ENCODE measurements at regions of chr6 and their contacts with region 1.

Region 1: GRCh38 chr6:154156135-154156896 is 117.3 kb downstream of the OPRM1 start:
- DNase-seq: no peak
- ATAC-seq: peak; percentile 79
- H3K4me3 ChIP-seq: peak overlapping the region; percentile 35; the same call in 1 of the 2 replicates
- H3K27ac ChIP-seq: peak overlapping the region; percentile 64
- H3K4me1 ChIP-seq: peaks cover 16% of the 10 kb centered on the region
- H3K27me3 ChIP-seq: no peaks in the 10 kb centered on the region; a peak in 1 of 4 replicates
- CTCF ChIP-seq: peak; percentile 55 to 73 (median 64)
- EP300 ChIP-seq: no peak
- POLR2A ChIP-seq: no peak
- RAD21 ChIP-seq: peak; percentile 71

Region 2: DNA sequence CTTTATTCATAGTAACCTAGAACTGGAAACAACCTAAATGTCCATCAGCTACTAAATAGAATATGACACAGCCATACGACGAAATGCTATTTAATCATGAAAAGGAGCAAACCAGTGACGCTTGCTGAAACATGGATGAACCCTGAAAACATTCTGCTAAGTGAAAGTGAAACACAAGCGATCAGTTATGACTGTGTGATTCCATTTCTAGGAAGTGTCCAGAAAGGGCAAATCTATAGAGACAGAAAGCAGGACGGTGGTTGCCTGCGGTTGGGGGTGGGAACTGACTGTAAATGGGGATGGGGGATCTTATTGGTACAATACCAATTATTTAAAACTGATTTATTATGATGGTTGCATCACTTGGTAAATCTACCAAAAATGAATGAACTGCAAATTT is 73.5 kb after region 1 on chr6:
- CTCF ChIA-PET with region 1: interaction called, 11 read pairs
- POLR2A ChIA-PET with region 1: interaction called, 5 read pairs
- RAD21 ChIA-PET with region 1: interaction called, 5 read pairs
- SMC1A ChIA-PET with region 1: interaction called, 5 read pairs
- in situ Hi-C with region 1: no loop called
- intact Hi-C with region 1: loop called (anchors 5 kb)
- DNase-seq: no peak
- ATAC-seq: peak; percentile 82
- H3K4me3 ChIP-seq: 0 out of 2 replicates have a peak overlapping the region, but pooled peaks have one; percentile 4
- H3K27ac ChIP-seq: peak overlapping the region; percentile 35; the same call in 1 of the 2 replicates
- H3K4me1 ChIP-seq: peaks cover 9% of the 10 kb centered on the region
- H3K27me3 ChIP-seq: no peaks in the 10 kb centered on the region
- CTCF ChIP-seq: no peak
- EP300 ChIP-seq: peak in 1 of 2 experiments; percentile 63; a peak in 1 of 4 replicates
- POLR2A ChIP-seq: no peak
- RAD21 ChIP-seq: no peak

Region 3: GRCh38 chr6:154252678-154253077 is 96.4 kb after region 1 on chr6:
- CTCF ChIA-PET with region 1: interaction called, 11 read pairs
- POLR2A ChIA-PET with region 1: interaction called, 4 read pairs
- RAD21 ChIA-PET with region 1: interaction called, 33 read pairs
- SMC1A ChIA-PET with region 1: interaction called, 59 read pairs
- in situ Hi-C with region 1: no loop called
- intact Hi-C with region 1: loop called (anchors 2 kb)
- DNase-seq: no peak
- ATAC-seq: no peak
- H3K4me3 ChIP-seq: no peak overlapping the region
- H3K27ac ChIP-seq: no peak overlapping the region
- H3K4me1 ChIP-seq: peaks cover 36% of the 10 kb centered on the region
- H3K27me3 ChIP-seq: no peaks in the 10 kb centered on the region
- CTCF ChIP-seq: no peak
- EP300 ChIP-seq: no peak
- POLR2A ChIP-seq: no peak
- RAD21 ChIP-seq: no peak

Region 4: GRCh38 chr6:154359161-154359574 is 202.9 kb after region 1 on chr6:
- CTCF ChIA-PET with region 1: no interaction called
- POLR2A ChIA-PET with region 1: no interaction called
- RAD21 ChIA-PET with region 1: interaction called, 3 read pairs
- SMC1A ChIA-PET with region 1: interaction called, 3 read pairs
- in situ Hi-C with region 1: loop called (anchors 5 kb)
- intact Hi-C with region 1: loop called (anchors 5 kb)
- DNase-seq: no peak
- ATAC-seq: no peak
- H3K4me3 ChIP-seq: no peak overlapping the region
- H3K27ac ChIP-seq: no peak overlapping the region
- H3K4me1 ChIP-seq: peaks cover 23% of the 10 kb centered on the region
- H3K27me3 ChIP-seq: peaks cover 0 to 5% of the 10 kb centered on the region in 2 experiments; a peak in 2 of 4 replicates
- CTCF ChIP-seq: no peak
- EP300 ChIP-seq: no peak
- POLR2A ChIP-seq: no peak
- RAD21 ChIP-seq: no peak

Region 5: GRCh38 chr6:154606457-154606856 is 450.1 kb after region 1 on chr6:
- CTCF ChIA-PET with region 1: no interaction called
- POLR2A ChIA-PET with region 1: no interaction called
- RAD21 ChIA-PET with region 1: no interaction called
- SMC1A ChIA-PET with region 1: no interaction called
- in situ Hi-C with region 1: no loop called
- intact Hi-C with region 1: loop called (anchors 5 kb)
- DNase-seq: peak; percentile 93
- ATAC-seq: peak; percentile 82
- H3K4me3 ChIP-seq: no peak overlapping the region; the same call in 1 of the 2 replicates
- H3K27ac ChIP-seq: peak overlapping the region; percentile 73
- H3K4me1 ChIP-seq: peaks cover 31% of the 10 kb centered on the region
- H3K27me3 ChIP-seq: no peaks in the 10 kb centered on the region
- CTCF ChIP-seq: 0 out of 6 replicates have a peak, but pooled peaks of 1 of the 3 experiments have one; percentile 7
- EP300 ChIP-seq: peak; percentile 90 to 98; a peak in 3 of 4 replicates
- POLR2A ChIP-seq: peak; percentile 64
- RAD21 ChIP-seq: no peak; the same call in 1 of the 2 replicates